PC-9 (cell line): ENCODE measurements at regions of chr2 and their contacts with region 1.

Region 1: GRCh38 chr2:143885461-143885860 is 634.5 kb downstream of the ZEB2 start:
- DNase-seq: no peak
- H3K4me3 ChIP-seq: no peak overlapping the region
- H3K27ac ChIP-seq: no peak overlapping the region
- H3K4me1 ChIP-seq: no peaks in the 10 kb centered on the region
- H3K27me3 ChIP-seq: no peaks in the 10 kb centered on the region
- CTCF ChIP-seq: no peak

Region 2: GRCh38 chr2:143535802-143536201 is 349.7 kb before region 1 on chr2:
- CTCF ChIA-PET with region 1: no interaction called
- POLR2A ChIA-PET with region 1: no interaction called
- intact Hi-C with region 1: no loop called
- DNase-seq: no peak
- H3K4me3 ChIP-seq: no peak overlapping the region
- H3K27ac ChIP-seq: no peak overlapping the region
- H3K4me1 ChIP-seq: no peaks in the 10 kb centered on the region
- H3K27me3 ChIP-seq: no peaks in the 10 kb centered on the region
- CTCF ChIP-seq: no peak

Region 3: GRCh38 chr2:143916781-143917180 is 31.3 kb after region 1 on chr2:
- CTCF ChIA-PET with region 1: no interaction called
- POLR2A ChIA-PET with region 1: interaction called, 11 read pairs
- intact Hi-C with region 1: no loop called
- DNase-seq: no peak
- H3K4me3 ChIP-seq: no peak overlapping the region
- H3K27ac ChIP-seq: no peak overlapping the region
- H3K4me1 ChIP-seq: no peaks in the 10 kb centered on the region
- H3K27me3 ChIP-seq: no peaks in the 10 kb centered on the region
- CTCF ChIP-seq: no peak